Activated CD4-positive, alpha-beta T cell treated with anti-CD3 and anti-CD28 coated beads for 36 hours (primary cell): ENCODE measurements at regions of chr9 and their contacts with region 1.

Region 1: GRCh38 chr9:92325269-92325990 is at the starts of genes CENPP and NOL8:
- DNase-seq: peak; percentile 90
- ATAC-seq: peak; percentile 95
- H3K4me3 Mint-ChIP-seq: peak within 1 kb of the TSS; percentile 89
- H3K27ac Mint-ChIP-seq: peak within 1 kb of the TSS; percentile 97
- H3K4me1 Mint-ChIP-seq: peaks cover 37% of the 10 kb centered on the region
- H3K27me3 Mint-ChIP-seq: no peaks in the 10 kb centered on the region
- total RNA-seq, gene CENPP: 22.8 to 32.3 TPM
- total RNA-seq, gene NOL8: 57.7 to 80.2 TPM

Region 2: DNA sequence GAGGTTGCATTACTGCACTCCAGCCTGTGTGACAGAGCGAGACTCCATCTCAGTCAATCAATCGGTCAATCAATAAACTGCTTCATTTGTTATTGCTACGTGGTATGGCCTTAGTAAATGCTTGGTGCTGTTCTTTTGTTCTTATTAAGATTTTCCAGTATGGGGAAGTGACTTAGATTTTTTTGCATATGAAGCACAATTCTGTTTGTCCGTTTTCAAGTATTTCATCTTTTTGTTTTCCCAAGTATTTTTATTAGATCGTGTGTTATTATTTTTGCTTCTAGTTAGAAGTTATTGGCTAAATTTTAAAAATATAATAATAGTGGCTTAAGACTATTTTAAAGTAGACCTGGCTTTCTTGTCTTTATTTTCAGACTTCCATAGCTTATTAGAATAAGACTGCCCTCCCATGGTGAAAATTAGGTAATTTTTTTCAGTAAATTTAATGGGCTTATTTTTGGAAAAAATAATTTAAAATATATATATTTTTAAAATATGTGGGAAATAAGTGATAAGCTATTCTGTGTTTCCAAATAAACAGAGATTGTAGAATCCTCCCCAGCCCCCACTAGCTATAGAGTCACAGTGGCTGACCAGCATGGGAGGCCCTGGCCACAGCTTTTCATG is 113.6 kb after region 1 on chr9:
- CTCF ChIA-PET with region 1: interaction called, 3 read pairs
- POLR2A ChIA-PET with region 1: no interaction called
- intact Hi-C with region 1: loop called in 1 of 2 experiments (anchors 5 kb)
- DNase-seq: no peak
- ATAC-seq: no peak
- H3K4me3 Mint-ChIP-seq: no peak overlapping the region
- H3K27ac Mint-ChIP-seq: no peak overlapping the region
- H3K4me1 Mint-ChIP-seq: peaks cover 3% of the 10 kb centered on the region
- H3K27me3 Mint-ChIP-seq: no peaks in the 10 kb centered on the region

Region 3: DNA sequence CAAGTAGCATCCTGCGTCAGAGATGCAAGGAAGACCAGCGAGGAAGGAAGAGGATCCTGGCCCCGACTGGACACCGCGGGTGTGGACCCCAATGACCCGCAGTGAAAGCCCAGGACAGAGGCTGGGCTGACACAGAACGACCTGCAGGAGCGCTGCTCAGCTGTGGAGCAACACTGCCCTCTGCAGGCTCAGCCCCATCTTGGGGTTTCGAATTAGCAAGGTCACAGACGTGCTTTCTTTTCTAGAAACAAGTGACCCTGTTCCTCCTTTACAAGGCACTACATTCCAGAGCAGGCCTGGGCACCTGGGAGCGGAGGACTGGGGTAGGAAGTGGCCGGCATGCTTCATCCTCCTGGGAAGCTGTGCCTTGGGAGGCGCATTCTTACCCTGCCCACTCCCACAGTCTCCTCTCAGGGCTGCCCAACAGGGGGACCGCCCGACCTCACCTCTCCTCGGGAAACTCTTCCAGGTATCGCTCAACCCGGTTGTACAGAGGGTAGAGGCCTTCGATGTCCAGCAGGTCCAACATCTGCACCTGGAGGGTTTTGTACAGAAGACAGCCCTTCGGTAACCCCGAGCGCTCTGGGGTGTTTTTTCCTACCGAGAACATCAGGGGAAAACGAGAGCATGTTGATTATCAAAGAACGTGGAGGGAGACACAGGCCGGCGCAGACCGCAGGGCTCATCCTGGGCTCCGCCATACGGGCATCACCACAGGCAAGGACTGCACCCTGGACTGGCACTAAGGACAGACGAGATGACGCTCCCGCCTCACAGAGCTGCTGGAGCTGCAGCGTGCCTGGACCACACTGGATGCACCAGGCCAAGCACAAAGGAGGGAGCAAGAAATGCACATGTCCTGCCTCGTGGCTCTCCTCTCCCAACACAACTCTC is 309.5 kb after region 1 on chr9:
- CTCF ChIA-PET with region 1: interaction called, 5 read pairs
- POLR2A ChIA-PET with region 1: no interaction called
- intact Hi-C with region 1: loop called (anchors 5 to 10 kb)
- DNase-seq: peak; percentile 83
- ATAC-seq: peak; percentile 69
- H3K4me3 Mint-ChIP-seq: no peak overlapping the region
- H3K27ac Mint-ChIP-seq: no peak overlapping the region
- H3K4me1 Mint-ChIP-seq: peaks cover 6% of the 10 kb centered on the region
- H3K27me3 Mint-ChIP-seq: no peaks in the 10 kb centered on the region

Region 4: GRCh38 chr9:92877531-92878430 is 552.4 kb after region 1 on chr9 and contains the start of gene ZNF484:
- CTCF ChIA-PET with region 1: no interaction called
- POLR2A ChIA-PET with region 1: interaction called, 4 read pairs
- intact Hi-C with region 1: loop called in 1 of 2 experiments (anchors 1 kb)
- DNase-seq: peak; percentile 98
- ATAC-seq: peak; percentile 97
- H3K4me3 Mint-ChIP-seq: peak within 1 kb of the TSS; percentile 99
- H3K27ac Mint-ChIP-seq: peak within 1 kb of the TSS; percentile 97
- H3K4me1 Mint-ChIP-seq: peaks cover 46% of the 10 kb centered on the region
- H3K27me3 Mint-ChIP-seq: no peaks in the 10 kb centered on the region
- total RNA-seq, gene ZNF484: 7.2 to 9.8 TPM